ENCODE measurements at regions of chr2 and their contacts with region 1.

Region 1: GRCh38 chr2:54545702-54546450 is 89.7 kb downstream of the SPTBN1 start:
- DNase-seq: peak; percentile 95
- ATAC-seq: peak; percentile 99
- H3K4me3 ChIP-seq: peak overlapping the region; percentile 22; the same call in 1 of the 2 replicates
- H3K27ac ChIP-seq: peak overlapping the region; percentile 89
- H3K4me1 ChIP-seq: peaks cover 28% of the 10 kb centered on the region
- H3K27me3 ChIP-seq: no peaks in the 10 kb centered on the region
- CTCF ChIP-seq: no peak

Region 2: DNA sequence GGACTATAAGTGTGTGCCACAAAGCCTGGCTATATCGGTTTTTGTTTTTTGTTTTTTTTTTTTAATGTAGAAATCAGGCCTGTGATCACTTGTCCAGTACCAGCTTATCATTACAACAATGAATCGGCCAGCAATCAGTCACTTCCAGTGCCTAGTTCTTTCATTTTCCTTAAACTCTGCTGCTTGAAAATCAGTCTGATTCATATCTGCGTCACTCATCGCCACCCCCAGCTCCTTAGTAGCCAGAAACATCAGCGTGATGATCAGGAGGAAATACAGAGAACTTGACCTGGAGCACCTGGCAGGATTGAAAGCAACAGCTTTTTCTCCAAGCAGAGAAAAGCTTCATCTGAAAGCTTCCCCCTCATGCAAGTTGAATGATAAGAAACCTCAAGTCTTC is 14.3 kb before region 1 on chr2:
- CTCF ChIA-PET with region 1: no interaction called
- POLR2A ChIA-PET with region 1: no interaction called
- intact Hi-C with region 1: loop called (anchors 1 kb)
- DNase-seq: peak; percentile 82
- ATAC-seq: peak; percentile 75
- H3K4me3 ChIP-seq: peak overlapping the region; percentile 49; the same call in 1 of the 2 replicates
- H3K27ac ChIP-seq: peak overlapping the region; percentile 86
- H3K4me1 ChIP-seq: peaks cover 37% of the 10 kb centered on the region
- H3K27me3 ChIP-seq: no peaks in the 10 kb centered on the region
- CTCF ChIP-seq: no peak

Measured in PC-3 (cell line).